ENCODE measurements at regions of chr14 and their contacts with region 1.

Region 1: DNA sequence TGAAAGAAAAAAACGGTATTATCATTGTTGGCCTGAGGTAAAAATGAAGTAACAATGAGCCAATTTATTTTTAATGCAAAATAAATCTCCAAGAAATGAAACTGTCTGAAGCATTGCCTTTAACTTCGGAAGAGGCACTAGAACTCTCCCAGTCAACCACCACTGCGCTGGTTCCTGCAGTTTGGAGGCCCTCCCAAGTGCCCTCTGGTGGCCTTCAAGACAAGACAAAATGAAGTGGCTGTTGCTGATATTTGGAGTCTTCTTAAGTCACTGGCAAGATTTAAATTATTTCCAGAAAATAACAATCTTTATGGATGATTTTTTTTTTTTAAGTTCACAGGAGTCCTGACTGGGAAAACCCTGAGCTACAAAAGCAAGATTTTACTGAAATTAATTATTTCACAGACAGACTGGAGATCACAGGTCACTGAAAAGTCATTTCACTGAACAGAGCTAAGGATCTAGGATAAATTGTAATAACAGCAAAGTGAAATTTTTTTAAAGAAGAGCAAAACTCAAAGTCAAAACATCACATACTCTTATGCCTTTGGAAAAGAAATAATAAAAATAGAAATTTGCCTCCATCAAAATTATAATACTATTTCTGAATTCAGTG is 58.2 kb downstream of the DICER1 start:
- DNase-seq: no peak
- H3K4me3 ChIP-seq: no peak overlapping the region
- H3K27ac ChIP-seq: no peak overlapping the region
- H3K4me1 ChIP-seq: peaks cover 0 to 40% (median 4%) of the 10 kb centered on the region in 3 donors
- H3K27me3 ChIP-seq: no peaks in the 10 kb centered on the region
- CTCF ChIP-seq: peak; percentile 39 to 73 (median 62)
- POLR2A ChIP-seq: no peak

Region 2: DNA sequence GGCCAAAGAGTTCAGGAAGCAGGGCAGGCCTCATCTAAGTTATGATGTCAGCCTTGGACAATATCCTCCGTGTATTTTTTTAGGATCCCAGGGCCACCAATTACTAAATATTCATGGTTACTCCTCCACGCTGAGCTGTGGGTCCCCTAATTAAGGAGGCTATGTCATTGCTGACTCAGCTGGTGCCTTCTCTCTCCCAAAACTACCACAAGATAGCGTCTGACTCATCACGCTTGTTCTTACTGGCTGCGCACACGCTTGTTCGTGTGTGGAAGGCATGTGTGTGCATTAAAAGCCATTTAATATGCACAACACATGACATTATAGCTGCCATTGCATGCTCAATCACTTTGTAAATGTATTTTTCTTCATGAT is 407.4 kb before region 1 on chr14:
- intact Hi-C with region 1: loop called (anchors 5 kb)
- DNase-seq: no peak
- H3K4me3 ChIP-seq: no peak overlapping the region
- H3K27ac ChIP-seq: no peak overlapping the region
- H3K4me1 ChIP-seq: peaks cover 0 to 7% (median 6%) of the 10 kb centered on the region in 3 donors
- H3K27me3 ChIP-seq: peaks cover 0 to 19% (median 0%) of the 10 kb centered on the region in 4 donors
- CTCF ChIP-seq: no peak
- POLR2A ChIP-seq: no peak